CD8-positive, alpha-beta T cell (primary cell): ENCODE measurements at regions of chr20 and their contacts with region 1.

Region 1: DNA sequence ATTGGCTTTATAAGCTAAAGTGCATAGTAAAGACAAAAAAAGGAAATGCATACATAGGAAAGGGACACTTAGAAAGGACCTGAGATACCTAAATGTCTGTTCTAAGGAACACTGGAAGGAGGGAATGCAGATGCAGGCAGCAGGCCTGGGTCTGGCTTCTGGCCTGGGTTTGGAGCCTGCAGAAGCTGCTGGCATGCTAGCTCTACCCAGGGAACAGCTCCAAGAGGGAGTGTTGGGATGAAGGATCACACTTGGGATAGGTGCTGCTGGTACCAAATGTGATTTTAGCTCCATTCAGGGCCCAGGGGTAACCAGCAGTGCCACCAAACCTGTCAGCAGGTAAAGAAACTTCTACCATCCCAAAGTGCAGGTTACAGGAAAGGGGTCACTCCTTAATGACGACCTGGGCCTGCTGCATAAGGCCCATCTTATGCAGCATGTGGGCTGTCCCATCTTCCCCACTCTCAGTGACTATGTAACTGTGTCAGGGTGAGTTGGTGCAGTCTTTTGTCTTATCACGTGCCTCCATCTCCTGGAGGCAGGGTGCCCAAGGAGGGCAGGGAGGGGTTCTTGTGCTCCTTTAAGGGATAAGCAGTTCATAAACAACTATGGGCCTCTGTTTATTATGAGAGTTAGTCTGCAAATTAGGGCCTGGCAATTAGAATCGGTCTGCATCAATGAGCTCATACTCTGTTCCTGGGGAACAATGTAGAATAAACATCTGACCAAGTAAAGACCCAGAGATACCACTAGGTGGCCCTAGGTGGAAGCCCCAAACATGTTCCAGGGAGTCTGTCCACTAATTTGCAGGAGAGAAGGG is 26.9 kb downstream of the DDX27 start:
- DNase-seq: peak in 3 of 9 experiments; percentile 17 to 62 (median 44)
- ATAC-seq: peak; percentile 82
- H3K4me3 ChIP-seq: no peak overlapping the region
- H3K4me3 Mint-ChIP-seq: no peak overlapping the region
- H3K27ac ChIP-seq: peak overlapping the region in 1 of 2 experiments; percentile 14
- H3K27ac Mint-ChIP-seq: peak overlapping the region; percentile 55
- H3K4me1 ChIP-seq: no peaks in the 10 kb centered on the region
- H3K4me1 Mint-ChIP-seq: peaks cover 8% of the 10 kb centered on the region
- H3K27me3 ChIP-seq: no peaks in the 10 kb centered on the region
- H3K27me3 Mint-ChIP-seq: no peaks in the 10 kb centered on the region
- CTCF ChIP-seq: peak; percentile 61

Region 2: DNA sequence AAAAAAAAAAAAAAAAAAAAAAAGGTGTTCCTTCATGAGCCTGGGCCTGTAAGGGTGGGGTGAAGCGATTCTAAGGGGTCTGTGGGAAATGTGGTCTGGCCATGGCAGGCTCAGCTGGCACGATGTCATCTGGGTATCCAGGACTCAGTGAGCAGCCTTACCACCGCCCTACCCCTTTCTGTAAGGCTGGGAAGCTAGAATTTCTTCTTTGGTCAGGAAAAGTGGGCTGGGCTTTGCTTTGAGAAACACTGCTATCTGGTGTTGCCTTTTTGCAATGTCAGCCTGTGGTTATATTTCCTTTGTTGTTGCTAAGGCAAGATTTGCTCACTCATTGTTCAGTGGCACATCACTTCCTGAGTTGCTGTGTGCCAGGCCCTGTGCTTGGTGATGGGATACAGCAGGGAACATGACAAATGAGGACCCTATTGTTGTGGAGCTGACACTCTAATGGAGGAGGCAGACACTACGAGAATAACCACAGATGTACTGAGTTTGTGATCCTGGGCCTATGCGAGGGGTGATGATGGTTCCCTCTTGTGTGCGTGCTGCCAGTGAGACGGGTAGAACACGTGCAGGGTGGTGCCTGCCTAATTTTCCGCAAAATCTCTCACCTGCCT is 77.6 kb after region 1 on chr20:
- CTCF ChIA-PET with region 1: interaction called, 17 read pairs
- POLR2A ChIA-PET with region 1: interaction called, 3 read pairs
- intact Hi-C with region 1: loop called (anchors 1 to 2 kb)
- DNase-seq: peak in 7 of 9 experiments; percentile 7 to 75 (median 33)
- ATAC-seq: peak; percentile 83
- H3K4me3 ChIP-seq: no peak overlapping the region
- H3K4me3 Mint-ChIP-seq: no peak overlapping the region
- H3K27ac ChIP-seq: peak overlapping the region in 1 of 2 experiments; percentile 43
- H3K27ac Mint-ChIP-seq: no peak overlapping the region
- H3K4me1 ChIP-seq: peaks cover 14% of the 10 kb centered on the region
- H3K4me1 Mint-ChIP-seq: peaks cover 28% of the 10 kb centered on the region
- H3K27me3 ChIP-seq: peaks cover 7 to 8% of the 10 kb centered on the region in 2 experiments
- H3K27me3 Mint-ChIP-seq: peaks cover 28% of the 10 kb centered on the region
- CTCF ChIP-seq: peak; percentile 33

Region 3: GRCh38 chr20:49508435-49509199 is 262.5 kb after region 1 on chr20:
- CTCF ChIA-PET with region 1: no interaction called
- POLR2A ChIA-PET with region 1: no interaction called
- intact Hi-C with region 1: loop called in 1 of 2 experiments (anchors 10 kb)
- DNase-seq: peak in 2 of 9 experiments; percentile 44 to 54
- ATAC-seq: peak; percentile 52
- H3K4me3 ChIP-seq: no peak overlapping the region
- H3K4me3 Mint-ChIP-seq: no peak overlapping the region
- H3K27ac ChIP-seq: no peak overlapping the region
- H3K27ac Mint-ChIP-seq: no peak overlapping the region
- H3K4me1 ChIP-seq: no peaks in the 10 kb centered on the region
- H3K4me1 Mint-ChIP-seq: no peaks in the 10 kb centered on the region
- H3K27me3 ChIP-seq: peaks cover 0 to 3% of the 10 kb centered on the region in 2 experiments
- H3K27me3 Mint-ChIP-seq: peaks cover 29% of the 10 kb centered on the region
- CTCF ChIP-seq: peak; percentile 18